Activated CD4-positive, alpha-beta T cell treated with anti-CD3 and anti-CD28 coated beads for 36 hours (primary cell): ENCODE measurements at regions of chr7 and their contacts with region 1.

Region 1: DNA sequence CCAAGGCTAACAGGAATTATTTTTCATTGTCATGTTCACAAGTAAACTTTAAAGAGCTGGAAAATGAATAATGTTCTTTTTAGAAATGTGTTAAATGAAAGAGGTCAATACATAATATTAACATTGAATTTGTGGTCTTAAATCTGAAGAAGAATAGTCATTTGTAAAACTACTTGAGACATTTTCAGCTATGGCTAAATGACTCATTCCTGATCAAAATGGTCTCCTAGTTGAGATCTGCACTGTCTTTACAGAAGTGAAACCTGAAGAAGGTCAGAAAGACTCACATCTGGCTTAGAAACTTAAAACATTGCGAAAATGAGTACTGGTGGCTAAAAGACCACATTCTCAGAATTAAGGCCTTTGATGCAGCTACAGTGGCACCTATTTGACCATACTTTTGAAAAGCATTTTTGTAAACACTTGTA is 5.9 kb downstream of the PIK3CG start:
- DNase-seq: no peak
- ATAC-seq: peak; percentile 82
- H3K4me3 Mint-ChIP-seq: no peak overlapping the region
- H3K27ac Mint-ChIP-seq: no peak overlapping the region
- H3K4me1 Mint-ChIP-seq: peaks cover 72% of the 10 kb centered on the region
- H3K27me3 Mint-ChIP-seq: no peaks in the 10 kb centered on the region

Region 2: DNA sequence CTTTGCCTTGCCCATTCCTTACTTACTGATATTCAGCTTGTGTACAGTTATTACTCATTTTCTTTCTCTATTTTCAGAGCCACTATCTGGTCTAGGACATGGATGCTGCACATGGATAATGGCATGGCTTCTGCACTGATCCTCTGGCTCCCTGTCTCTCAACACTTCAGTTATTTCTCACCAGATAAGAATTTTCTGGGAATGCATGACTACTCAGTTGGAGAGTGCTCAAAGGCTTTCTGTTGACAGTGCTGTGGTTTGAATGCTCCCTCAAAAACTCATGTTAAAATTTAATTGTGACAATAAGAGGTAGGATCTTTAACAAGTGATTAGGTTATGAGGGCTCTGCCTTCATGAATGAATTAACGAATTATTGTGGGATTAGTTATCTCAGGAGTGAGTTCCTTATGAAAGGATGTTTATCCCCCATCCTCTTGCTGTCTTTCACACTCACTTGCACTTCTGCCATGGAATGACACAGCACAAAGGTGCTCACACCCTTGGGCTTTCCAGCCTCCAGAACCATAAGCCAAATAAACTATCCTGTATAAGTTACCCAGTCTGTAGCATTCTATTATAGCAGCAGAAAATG is 22.1 kb before region 1 on chr7:
- CTCF ChIA-PET with region 1: no interaction called
- POLR2A ChIA-PET with region 1: no interaction called
- intact Hi-C with region 1: no loop called
- DNase-seq: no peak
- ATAC-seq: no peak
- H3K4me3 Mint-ChIP-seq: no peak overlapping the region
- H3K27ac Mint-ChIP-seq: no peak overlapping the region
- H3K4me1 Mint-ChIP-seq: no peaks in the 10 kb centered on the region
- H3K27me3 Mint-ChIP-seq: peaks cover 2% of the 10 kb centered on the region

Region 3: DNA sequence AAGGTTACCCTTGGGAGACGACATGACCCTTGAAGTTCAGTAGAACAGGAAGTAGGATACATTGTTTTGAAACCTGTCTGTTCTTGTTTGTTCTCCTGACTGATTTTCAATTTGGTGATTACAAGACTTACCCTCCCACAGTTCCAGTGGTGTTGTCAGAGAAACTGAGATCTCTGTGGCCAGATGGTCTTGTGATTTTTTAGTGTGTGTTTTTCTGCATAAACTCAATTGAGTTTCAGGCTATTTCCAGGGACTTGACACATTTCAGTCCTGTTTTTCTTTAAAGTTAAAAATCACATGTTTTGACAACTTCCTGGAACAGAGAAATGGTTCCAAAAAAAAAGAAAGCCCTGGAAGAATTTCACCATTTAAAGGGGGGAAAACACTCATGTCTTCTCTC is 16.4 kb after region 1 on chr7:
- CTCF ChIA-PET with region 1: no interaction called
- POLR2A ChIA-PET with region 1: interaction called, 3 read pairs
- intact Hi-C with region 1: loop called in 1 of 2 experiments (anchors 2 kb)
- DNase-seq: no peak
- ATAC-seq: peak; percentile 63
- H3K4me3 Mint-ChIP-seq: no peak overlapping the region
- H3K27ac Mint-ChIP-seq: peak overlapping the region; percentile 2
- H3K4me1 Mint-ChIP-seq: peaks cover 16% of the 10 kb centered on the region
- H3K27me3 Mint-ChIP-seq: no peaks in the 10 kb centered on the region

Region 4: DNA sequence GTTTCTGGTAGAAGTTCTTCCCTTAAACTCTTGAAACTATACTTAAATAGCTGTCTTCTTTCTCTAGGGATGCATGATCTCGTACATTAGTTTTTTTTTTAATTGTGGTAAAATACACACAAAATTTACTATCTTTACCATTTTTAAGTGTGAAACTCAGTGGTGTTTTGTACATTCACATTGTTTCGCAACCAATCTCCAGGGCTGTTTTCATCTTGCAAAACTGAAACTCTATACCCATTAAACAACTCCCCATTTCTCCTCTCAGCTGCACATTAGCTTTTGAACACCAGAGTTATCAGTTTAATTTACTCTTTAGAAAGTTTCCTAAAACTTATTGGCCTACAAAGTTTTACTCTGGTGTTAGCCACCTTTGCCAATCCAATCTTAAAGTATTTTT is 128.0 kb after region 1 on chr7:
- CTCF ChIA-PET with region 1: no interaction called
- POLR2A ChIA-PET with region 1: no interaction called
- intact Hi-C with region 1: no loop called
- DNase-seq: no peak
- ATAC-seq: no peak
- H3K4me3 Mint-ChIP-seq: no peak overlapping the region
- H3K27ac Mint-ChIP-seq: no peak overlapping the region
- H3K4me1 Mint-ChIP-seq: no peaks in the 10 kb centered on the region
- H3K27me3 Mint-ChIP-seq: peaks cover 5% of the 10 kb centered on the region

Region 5: GRCh38 chr7:107025449-107026103 is 154.6 kb after region 1 on chr7:
- CTCF ChIA-PET with region 1: no interaction called
- POLR2A ChIA-PET with region 1: no interaction called
- intact Hi-C with region 1: no loop called
- DNase-seq: no peak
- ATAC-seq: no peak
- H3K4me3 Mint-ChIP-seq: no peak overlapping the region
- H3K27ac Mint-ChIP-seq: no peak overlapping the region
- H3K4me1 Mint-ChIP-seq: no peaks in the 10 kb centered on the region
- H3K27me3 Mint-ChIP-seq: no peaks in the 10 kb centered on the region